ENCODE measurements at regions of chr20 and their contacts with region 1.

Region 1: GRCh38 chr20:19974626-19975435 is 42.3 kb upstream of the NAA20 start:
- DNase-seq: peak; percentile 95
- H3K27ac ChIP-seq: peak overlapping the region; percentile 100
- CTCF ChIP-seq: no peak

Region 2: GRCh38 chr20:19583532-19584175 is 391.2 kb before region 1 on chr20:
- CTCF ChIA-PET with region 1: no interaction called
- POLR2A ChIA-PET with region 1: no interaction called
- DNase-seq: peak; percentile 52
- H3K27ac ChIP-seq: no peak overlapping the region
- CTCF ChIP-seq: peak; percentile 51

Region 3: GRCh38 chr20:19838468-19838867 is 136.4 kb before region 1 on chr20:
- CTCF ChIA-PET with region 1: no interaction called
- POLR2A ChIA-PET with region 1: no interaction called
- DNase-seq: no peak
- H3K27ac ChIP-seq: peak overlapping the region; percentile 8; the same call in 1 of the 2 replicates
- CTCF ChIP-seq: no peak

Region 4: GRCh38 chr20:19885939-19886660 is 88.7 kb before region 1 on chr20:
- CTCF ChIA-PET with region 1: interaction called, 3 read pairs
- POLR2A ChIA-PET with region 1: interaction called, 11 read pairs
- DNase-seq: peak; percentile 70
- H3K27ac ChIP-seq: peak overlapping the region; percentile 97
- CTCF ChIP-seq: no peak

Region 5: GRCh38 chr20:19928328-19929011 is 46.4 kb before region 1 on chr20:
- CTCF ChIA-PET with region 1: no interaction called
- POLR2A ChIA-PET with region 1: interaction called, 13 read pairs
- DNase-seq: peak; percentile 92
- H3K27ac ChIP-seq: peak overlapping the region; percentile 96
- CTCF ChIP-seq: no peak

Region 6: GRCh38 chr20:19934792-19935491 is 39.9 kb before region 1 on chr20:
- CTCF ChIA-PET with region 1: no interaction called
- POLR2A ChIA-PET with region 1: interaction called, 10 read pairs
- DNase-seq: peak; percentile 50
- H3K27ac ChIP-seq: peak overlapping the region; percentile 81
- CTCF ChIP-seq: no peak

Region 7: DNA sequence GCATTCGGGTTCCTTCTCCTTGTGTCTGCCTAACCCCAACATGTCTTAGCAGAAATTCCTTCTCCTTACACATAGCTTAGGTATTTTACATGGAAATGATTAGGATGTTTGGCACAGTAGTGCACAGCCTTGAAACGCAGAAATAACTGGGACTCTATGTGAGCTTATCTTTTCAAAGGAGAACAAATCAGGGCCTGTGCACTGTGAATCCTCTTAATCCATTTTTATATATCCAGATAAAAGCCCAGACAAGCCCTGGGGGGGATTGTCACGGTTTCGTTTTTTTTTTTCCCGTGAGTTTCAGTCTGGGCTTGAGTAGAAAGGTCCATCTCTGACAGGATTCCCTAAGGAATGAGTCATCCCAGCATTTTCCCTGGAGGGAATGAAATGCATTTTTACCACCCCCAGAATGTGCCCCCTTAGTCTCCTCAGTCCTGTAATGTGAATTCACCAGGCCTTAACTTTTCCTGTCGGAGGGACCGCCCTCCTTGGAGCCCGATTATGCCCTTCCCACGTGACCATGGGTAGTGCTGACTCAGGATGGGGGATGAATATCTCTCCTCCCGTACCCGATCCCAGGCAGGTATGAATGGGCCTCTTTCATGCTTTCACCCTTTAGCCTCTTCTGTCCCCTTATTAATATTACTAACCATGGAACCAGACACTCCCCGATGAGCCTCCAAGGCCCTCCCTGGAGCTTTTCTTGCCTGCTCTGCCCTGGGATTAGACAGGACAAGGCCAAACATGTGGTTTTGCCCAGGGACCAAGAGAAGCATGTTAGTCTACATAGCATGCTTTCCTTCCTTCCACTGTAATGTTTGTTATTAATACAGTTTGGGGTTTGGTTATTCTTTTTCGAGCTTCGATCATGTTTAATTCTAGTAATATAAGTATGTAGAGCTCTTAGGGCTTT is 18.4 kb after region 1 on chr20:
- CTCF ChIA-PET with region 1: interaction called, 4 read pairs
- POLR2A ChIA-PET with region 1: interaction called, 28 read pairs
- DNase-seq: peak; percentile 95
- H3K27ac ChIP-seq: peak overlapping the region; percentile 100
- CTCF ChIP-seq: no peak

Region 8: DNA sequence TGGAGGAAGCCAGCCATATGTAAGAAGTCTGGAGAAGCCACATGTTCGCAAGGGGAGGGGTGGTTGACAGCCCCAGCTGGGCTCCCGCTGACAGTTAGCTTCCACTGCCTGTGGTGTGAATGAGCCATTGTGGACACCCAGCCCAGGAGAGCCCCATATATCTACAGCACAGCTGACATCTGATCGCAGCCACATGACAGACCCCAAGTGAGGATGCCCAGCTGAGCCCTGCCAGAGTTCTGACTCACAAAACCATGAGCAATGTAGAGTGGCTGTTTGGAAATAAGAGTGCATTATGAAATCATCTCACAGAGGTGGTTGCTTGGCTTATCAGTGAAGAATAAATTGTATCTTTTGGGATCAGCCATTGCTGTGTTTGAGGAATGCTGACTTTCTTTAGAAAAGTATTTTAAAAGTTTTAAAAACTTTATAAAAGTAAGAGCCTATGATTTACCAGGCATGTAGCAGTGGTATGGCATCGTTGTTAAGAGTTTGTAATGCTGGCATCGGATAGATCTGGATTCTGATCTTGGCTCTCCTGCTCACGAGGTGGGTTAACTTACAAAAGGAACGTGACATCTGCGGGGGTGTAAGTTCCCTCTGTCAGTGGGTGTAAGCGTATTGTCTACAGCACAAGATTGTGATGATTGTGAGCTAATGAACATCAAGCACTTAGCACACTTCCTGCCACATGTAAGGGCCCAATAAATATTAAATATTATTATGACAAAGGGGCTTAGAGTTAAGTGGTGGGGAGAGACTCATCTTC is 101.7 kb after region 1 on chr20:
- CTCF ChIA-PET with region 1: no interaction called
- POLR2A ChIA-PET with region 1: no interaction called
- DNase-seq: peak; percentile 13
- H3K27ac ChIP-seq: no peak overlapping the region
- CTCF ChIP-seq: no peak